HEK293 (cell line): ENCODE measurements at regions of chr15 and their contacts with region 1.

Region 1: DNA sequence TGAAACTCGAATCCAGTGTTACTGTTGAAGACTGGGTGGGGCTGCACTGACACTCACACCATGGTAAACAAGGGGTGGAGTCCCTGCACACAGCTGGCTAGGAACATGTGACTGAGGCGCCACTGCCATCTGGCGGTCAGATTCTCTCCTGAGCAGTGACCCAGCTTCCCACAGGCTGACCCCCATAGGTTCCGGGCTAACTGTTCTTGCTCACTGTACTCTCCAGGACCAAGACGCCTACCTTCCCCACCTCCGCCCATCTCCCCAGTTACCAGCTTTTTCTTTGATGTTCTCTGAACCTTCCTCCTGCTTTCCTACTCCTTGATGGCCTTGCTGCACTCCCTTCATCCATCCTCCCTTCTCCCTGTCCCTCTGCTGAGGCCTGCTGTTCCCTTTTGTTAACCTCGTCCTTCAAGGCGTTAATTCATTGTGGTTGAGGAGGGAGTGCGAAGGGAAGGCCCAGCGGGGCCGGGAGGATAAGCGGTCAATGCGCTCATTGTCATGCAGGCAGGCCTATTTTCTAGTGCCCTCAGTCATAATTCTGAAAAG is 115.2 kb downstream of the ATP8B4 start:
- H3K4me3 ChIP-seq: no peak overlapping the region
- H3K27ac ChIP-seq: no peak overlapping the region
- H3K4me1 ChIP-seq: no peaks in the 10 kb centered on the region
- CTCF ChIP-seq: no peak

Region 2: DNA sequence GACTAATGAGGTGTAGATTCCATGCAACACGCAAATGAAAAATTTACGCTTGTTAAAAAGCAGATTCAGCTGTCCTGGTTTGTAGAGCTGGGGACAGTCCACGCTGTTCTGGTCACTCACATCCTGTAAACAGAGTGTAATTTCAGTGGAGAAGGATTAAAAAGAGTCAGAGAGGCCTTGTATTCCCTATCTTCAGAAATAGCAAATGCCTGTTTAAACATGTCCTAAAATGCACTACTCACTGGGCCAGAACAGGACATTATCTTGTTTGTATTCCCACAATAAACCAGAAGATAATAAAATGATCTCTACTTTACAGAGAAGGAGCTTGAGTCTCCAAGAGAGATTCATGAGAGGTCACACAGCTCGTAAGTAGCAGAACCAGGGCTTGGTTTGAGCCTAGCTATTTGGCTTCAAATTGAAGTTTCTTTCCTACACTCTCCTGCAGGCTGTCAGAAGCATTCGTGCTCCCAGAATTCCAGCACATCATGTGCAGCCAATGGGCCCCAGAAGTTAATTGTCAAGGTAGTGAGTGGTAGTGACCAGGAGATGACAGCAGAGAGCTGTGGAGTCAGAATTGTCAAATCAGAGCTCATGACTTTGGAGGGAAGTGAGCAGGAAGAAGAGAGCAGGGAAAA is 127.3 kb before region 1 on chr15:
- CTCF ChIA-PET with region 1: interaction called, 16 read pairs
- POLR2A ChIA-PET with region 1: no interaction called
- H3K4me3 ChIP-seq: no peak overlapping the region
- H3K27ac ChIP-seq: no peak overlapping the region
- H3K4me1 ChIP-seq: no peaks in the 10 kb centered on the region
- CTCF ChIP-seq: no peak